ENCODE measurements at regions of chr5 and their contacts with region 1.

Region 1: GRCh38 chr5:151659001-151659754 is 27.5 kb downstream of the SPARC start:
- DNase-seq: peak; percentile 78 to 86 (median 84)
- ATAC-seq: peak; percentile 99
- H3K4me3 ChIP-seq: no peak overlapping the region
- H3K27ac ChIP-seq: no peak overlapping the region
- H3K4me1 ChIP-seq: no peaks in the 10 kb centered on the region; a peak in 2 of 5 replicates
- H3K27me3 ChIP-seq: peaks cover 3 to 21% of the 10 kb centered on the region in 2 experiments
- CTCF ChIP-seq: peak; percentile 90 to 95 (median 92)
- EP300 ChIP-seq: no peak
- POLR2A ChIP-seq: no peak
- RAD21 ChIP-seq: peak; percentile 92 to 97

Region 2: GRCh38 chr5:151675611-151676313 is 16.6 kb after region 1 on chr5:
- CTCF ChIA-PET with region 1: no interaction called
- POLR2A ChIA-PET with region 1: no interaction called
- in situ Hi-C with region 1: no loop called
- intact Hi-C with region 1: no loop called
- DNase-seq: no peak
- ATAC-seq: no peak
- H3K4me3 ChIP-seq: no peak overlapping the region
- H3K27ac ChIP-seq: no peak overlapping the region
- H3K4me1 ChIP-seq: no peaks in the 10 kb centered on the region; a peak in 1 of 5 replicates
- H3K27me3 ChIP-seq: peaks cover 33 to 37% of the 10 kb centered on the region in 2 experiments
- CTCF ChIP-seq: no peak
- EP300 ChIP-seq: no peak
- POLR2A ChIP-seq: no peak
- RAD21 ChIP-seq: no peak

Region 3: GRCh38 chr5:151686674-151687407 is 27.7 kb after region 1 on chr5 and contains the start of gene SPARC:
- CTCF ChIA-PET with region 1: no interaction called
- POLR2A ChIA-PET with region 1: no interaction called
- in situ Hi-C with region 1: no loop called
- intact Hi-C with region 1: no loop called
- DNase-seq: peak in 1 of 4 experiments; percentile 53
- ATAC-seq: peak; percentile 75
- H3K4me3 ChIP-seq: no peak within 1 kb of the TSS
- H3K27ac ChIP-seq: no peak within 1 kb of the TSS
- H3K4me1 ChIP-seq: peaks cover 6 to 21% of the 10 kb centered on the region in 2 experiments; a peak in 4 of 5 replicates
- H3K27me3 ChIP-seq: peaks cover 3 to 33% of the 10 kb centered on the region in 2 experiments; a peak in 3 of 5 replicates
- CTCF ChIP-seq: no peak
- EP300 ChIP-seq: no peak
- POLR2A ChIP-seq: no peak
- RAD21 ChIP-seq: no peak
- polyA plus RNA-seq, gene SPARC: 12.2 to 35.6 TPM

Region 4: GRCh38 chr5:151719228-151720000 is 60.2 kb after region 1 on chr5:
- CTCF ChIA-PET with region 1: interaction called, 6 read pairs
- POLR2A ChIA-PET with region 1: no interaction called
- in situ Hi-C with region 1: no loop called
- intact Hi-C with region 1: loop called (anchors 1 kb)
- DNase-seq: peak in 1 of 4 experiments; percentile 66
- ATAC-seq: peak; percentile 94
- H3K4me3 ChIP-seq: no peak overlapping the region
- H3K27ac ChIP-seq: no peak overlapping the region
- H3K4me1 ChIP-seq: no peaks in the 10 kb centered on the region; a peak in 1 of 5 replicates
- H3K27me3 ChIP-seq: no peaks in the 10 kb centered on the region; a peak in 1 of 5 replicates
- CTCF ChIP-seq: peak; percentile 66 to 73 (median 68)
- EP300 ChIP-seq: no peak
- POLR2A ChIP-seq: no peak
- RAD21 ChIP-seq: peak; percentile 60 to 83; a peak in 3 of 4 replicates

Region 5: GRCh38 chr5:151740336-151740942 is 81.3 kb after region 1 on chr5:
- CTCF ChIA-PET with region 1: interaction called, 53 read pairs
- POLR2A ChIA-PET with region 1: interaction called, 5 read pairs
- in situ Hi-C with region 1: loop called (anchors 5 kb)
- intact Hi-C with region 1: loop called (anchors 1 kb)
- DNase-seq: peak; percentile 77 to 79 (median 78)
- ATAC-seq: peak; percentile 92
- H3K4me3 ChIP-seq: no peak overlapping the region
- H3K27ac ChIP-seq: no peak overlapping the region
- H3K4me1 ChIP-seq: peaks cover 0 to 6% of the 10 kb centered on the region in 2 experiments; a peak in 3 of 5 replicates
- H3K27me3 ChIP-seq: no peaks in the 10 kb centered on the region
- CTCF ChIP-seq: peak; percentile 73 to 90 (median 81)
- EP300 ChIP-seq: no peak
- POLR2A ChIP-seq: no peak
- RAD21 ChIP-seq: peak; percentile 55 to 76

Region 6: DNA sequence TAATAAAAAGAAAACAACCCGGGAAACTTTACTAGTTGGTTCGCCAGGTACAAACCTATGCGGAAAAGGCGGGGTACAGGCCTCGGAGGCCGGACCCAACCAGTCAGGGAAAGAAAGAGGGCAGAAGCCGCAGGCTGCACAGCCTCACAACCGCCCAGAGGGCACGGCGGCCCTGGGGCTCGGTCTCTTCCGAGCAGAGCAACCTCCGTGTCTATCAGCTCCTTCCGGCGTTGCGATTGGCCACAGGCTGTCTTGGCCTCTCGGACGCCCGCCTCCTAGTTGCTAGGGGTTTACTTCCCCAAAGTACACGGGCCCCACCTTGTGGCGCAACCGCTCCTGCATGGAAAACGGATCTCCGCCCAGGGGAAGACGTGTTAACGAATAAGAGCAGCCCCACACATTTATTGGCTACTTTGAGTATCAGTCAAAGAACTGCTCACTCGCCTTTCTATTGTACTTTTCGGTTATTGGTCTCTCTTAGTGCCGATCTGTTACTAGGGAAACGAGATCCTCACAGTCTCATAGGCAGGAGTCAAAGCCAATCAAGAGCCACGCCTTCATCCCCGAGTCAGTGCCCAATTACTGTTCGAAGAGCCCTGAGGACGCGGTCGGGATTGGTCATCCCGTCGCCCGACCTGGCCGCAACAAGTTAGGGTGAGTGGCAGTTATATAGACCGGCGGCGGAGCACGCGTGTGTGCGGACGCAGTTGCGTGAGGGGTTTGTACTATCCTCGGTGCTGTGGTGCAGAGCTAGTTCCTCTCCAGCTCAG is 112.3 kb after region 1 on chr5 and contains the start of gene G3BP1:
- CTCF ChIA-PET with region 1: interaction called, 16 read pairs
- POLR2A ChIA-PET with region 1: interaction called, 4 read pairs
- in situ Hi-C with region 1: no loop called
- intact Hi-C with region 1: loop called (anchors 1 kb)
- DNase-seq: peak; percentile 90 to 100 (median 95)
- ATAC-seq: peak; percentile 87
- H3K4me3 ChIP-seq: peak within 1 kb of the TSS; percentile 90
- H3K27ac ChIP-seq: peak within 1 kb of the TSS; percentile 91
- H3K4me1 ChIP-seq: peaks cover 12 to 19% of the 10 kb centered on the region in 2 experiments; a peak in 4 of 5 replicates
- H3K27me3 ChIP-seq: no peaks in the 10 kb centered on the region
- CTCF ChIP-seq: peak; percentile 78 to 91 (median 82)
- EP300 ChIP-seq: peak; percentile 58
- POLR2A ChIP-seq: peak; percentile 95
- RAD21 ChIP-seq: peak; percentile 64 to 78
- polyA plus RNA-seq, gene G3BP1: 54.7 to 55.5 TPM

Region 7: DNA sequence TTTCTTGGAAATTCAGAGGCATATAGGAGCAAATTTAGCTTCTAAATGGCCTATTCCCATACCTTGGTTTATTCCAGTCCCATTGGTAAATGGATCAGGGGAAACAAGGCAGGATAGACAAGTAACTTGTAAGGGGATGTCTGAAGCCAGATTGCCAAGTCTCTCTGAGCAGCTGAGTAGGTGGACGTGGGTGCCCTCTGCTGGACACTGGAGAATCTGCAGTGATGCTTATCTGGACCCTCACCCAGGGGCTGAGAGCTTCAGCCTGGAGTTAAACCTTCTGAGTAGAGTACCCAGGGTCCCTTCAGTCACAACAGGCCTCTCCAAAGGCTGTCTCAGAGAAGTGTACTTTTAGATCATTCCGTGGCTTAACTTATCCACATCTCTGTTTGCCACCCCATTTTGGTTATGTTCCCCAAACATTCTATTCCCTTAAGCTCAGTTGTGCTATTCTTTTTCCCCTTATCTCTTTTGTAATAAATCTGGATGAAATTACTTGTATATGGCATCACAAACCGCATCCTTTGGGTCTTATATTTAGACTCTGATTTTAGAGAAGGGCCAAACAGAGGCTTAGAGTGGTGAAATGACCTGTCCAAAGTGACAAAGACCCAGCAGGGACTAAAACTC is 483.8 kb after region 1 on chr5:
- CTCF ChIA-PET with region 1: no interaction called
- POLR2A ChIA-PET with region 1: no interaction called
- in situ Hi-C with region 1: no loop called
- intact Hi-C with region 1: loop called (anchors 5 kb)
- DNase-seq: peak; percentile 70 to 78 (median 73)
- ATAC-seq: peak; percentile 98
- H3K4me3 ChIP-seq: no peak overlapping the region
- H3K27ac ChIP-seq: no peak overlapping the region
- H3K4me1 ChIP-seq: no peaks in the 10 kb centered on the region
- H3K27me3 ChIP-seq: no peaks in the 10 kb centered on the region
- CTCF ChIP-seq: peak; percentile 69 to 91 (median 76)
- EP300 ChIP-seq: no peak
- POLR2A ChIP-seq: no peak
- RAD21 ChIP-seq: peak; percentile 42 to 66; a peak in 3 of 4 replicates